PC-3 (cell line): ENCODE measurements at regions of chr12 and their contacts with region 1.

Region 1: GRCh38 chr12:25458047-25458552 is 95.0 kb downstream of the LMNTD1 start:
- DNase-seq: peak; percentile 93
- ATAC-seq: peak; percentile 95
- H3K4me3 ChIP-seq: peak overlapping the region; percentile 20; the same call in 1 of the 2 replicates
- H3K27ac ChIP-seq: peak overlapping the region; percentile 82
- H3K4me1 ChIP-seq: peaks cover 19% of the 10 kb centered on the region
- H3K27me3 ChIP-seq: no peaks in the 10 kb centered on the region
- CTCF ChIP-seq: no peak

Region 2: DNA sequence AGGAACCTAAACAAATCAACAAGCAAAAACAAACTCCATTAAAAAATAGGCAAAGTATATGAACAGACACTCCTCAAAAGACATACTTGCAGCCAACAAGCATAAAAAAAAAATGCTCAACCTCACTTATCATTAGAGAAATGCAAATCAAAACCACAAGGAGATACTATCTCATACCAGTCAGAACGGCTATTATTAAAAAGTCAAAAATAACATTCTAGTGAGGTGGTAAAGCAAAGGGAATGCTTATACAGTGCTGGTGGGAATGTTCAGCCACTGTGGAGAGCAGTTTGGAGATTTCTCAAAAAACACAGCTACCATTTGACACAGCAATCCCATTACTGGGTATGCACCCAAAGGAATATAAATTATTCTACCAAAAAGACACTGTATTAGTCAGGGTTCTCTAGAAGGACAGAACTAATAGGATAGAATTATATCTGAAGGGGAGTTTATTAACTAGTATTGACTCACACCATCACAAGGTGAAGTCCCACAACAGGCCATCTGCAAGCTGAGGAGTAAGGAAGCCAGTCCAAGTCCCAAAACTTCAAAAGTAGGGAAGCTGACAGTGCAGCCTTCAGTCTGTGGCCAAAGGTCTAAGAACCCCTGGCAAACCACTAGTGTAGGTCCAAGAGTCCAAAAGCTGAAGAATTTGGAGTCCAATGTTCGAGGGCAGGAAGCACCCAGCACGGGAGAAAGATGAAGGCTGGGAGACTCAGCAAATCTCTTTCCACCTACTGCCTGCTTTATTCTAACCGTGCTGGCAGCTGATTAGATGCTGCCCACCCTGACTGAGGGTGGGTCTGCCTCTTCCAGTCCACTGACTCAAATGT is 105.8 kb before region 1 on chr12:
- CTCF ChIA-PET with region 1: no interaction called
- POLR2A ChIA-PET with region 1: no interaction called
- intact Hi-C with region 1: no loop called
- DNase-seq: no peak
- ATAC-seq: no peak
- H3K4me3 ChIP-seq: no peak overlapping the region
- H3K27ac ChIP-seq: no peak overlapping the region
- H3K4me1 ChIP-seq: no peaks in the 10 kb centered on the region
- H3K27me3 ChIP-seq: no peaks in the 10 kb centered on the region
- CTCF ChIP-seq: no peak

Region 3: GRCh38 chr12:25491396-25492325 is 33.6 kb after region 1 on chr12:
- CTCF ChIA-PET with region 1: no interaction called
- POLR2A ChIA-PET with region 1: interaction called, 3 read pairs
- intact Hi-C with region 1: loop called (anchors 5 kb)
- DNase-seq: peak; percentile 20
- ATAC-seq: no peak
- H3K4me3 ChIP-seq: no peak overlapping the region
- H3K27ac ChIP-seq: no peak overlapping the region
- H3K4me1 ChIP-seq: peaks cover 33% of the 10 kb centered on the region
- H3K27me3 ChIP-seq: no peaks in the 10 kb centered on the region
- CTCF ChIP-seq: no peak

Region 4: DNA sequence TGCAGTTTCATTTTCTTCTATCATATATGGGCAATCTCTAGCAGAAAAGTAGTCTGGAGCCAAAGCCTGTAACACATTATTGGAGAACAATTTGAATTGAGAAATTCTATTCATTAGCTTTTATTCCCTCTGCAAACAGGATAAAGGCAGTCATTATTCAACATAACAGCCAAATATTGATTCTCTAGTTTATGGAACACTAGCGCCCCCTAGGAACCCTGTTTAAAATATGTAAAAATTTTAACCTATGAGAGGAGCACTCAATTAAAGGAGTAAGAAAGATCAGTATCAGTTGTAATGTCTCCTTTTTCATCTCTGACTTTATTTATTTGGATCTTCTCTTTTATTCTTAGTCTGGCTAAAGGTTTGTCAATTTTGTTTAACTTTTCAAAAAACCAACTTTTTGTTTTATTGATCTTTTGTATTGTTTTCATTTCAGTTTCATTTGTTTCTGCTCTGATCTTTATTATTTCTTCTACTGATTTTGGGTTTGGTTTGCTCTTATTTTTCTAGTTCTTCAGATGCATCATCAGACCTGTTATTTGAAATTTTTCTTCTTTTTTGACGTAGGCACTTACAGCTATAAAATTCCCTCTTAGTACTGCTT is 99.8 kb after region 1 on chr12:
- CTCF ChIA-PET with region 1: no interaction called
- POLR2A ChIA-PET with region 1: no interaction called
- intact Hi-C with region 1: loop called (anchors 5 kb)
- DNase-seq: peak; percentile 75
- ATAC-seq: no peak
- H3K4me3 ChIP-seq: no peak overlapping the region
- H3K27ac ChIP-seq: no peak overlapping the region
- H3K4me1 ChIP-seq: no peaks in the 10 kb centered on the region
- H3K27me3 ChIP-seq: no peaks in the 10 kb centered on the region
- CTCF ChIP-seq: peak; percentile 78

Region 5: DNA sequence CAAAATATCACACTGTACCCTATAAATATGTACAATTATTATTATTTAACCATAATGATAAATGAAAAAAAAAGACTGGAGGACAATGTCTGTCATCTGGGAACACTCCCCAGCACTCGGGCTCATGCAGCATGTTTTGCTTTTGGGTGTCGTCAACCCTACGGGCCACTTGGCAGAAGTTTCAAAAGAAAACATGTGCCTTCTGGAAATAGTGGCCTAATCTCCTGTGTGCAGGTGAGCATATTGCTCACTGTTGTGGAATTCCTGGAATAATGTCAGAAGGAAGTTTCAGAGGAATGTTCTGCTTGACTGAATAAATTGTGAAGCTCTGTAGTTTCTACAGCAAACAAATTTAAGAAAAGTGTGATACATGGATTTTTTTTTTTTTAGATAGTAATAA is 1035.6 kb after region 1 on chr12:
- CTCF ChIA-PET with region 1: no interaction called
- POLR2A ChIA-PET with region 1: interaction called, 12 read pairs
- intact Hi-C with region 1: no loop called
- DNase-seq: peak; percentile 97
- ATAC-seq: peak; percentile 85
- H3K4me3 ChIP-seq: no peak overlapping the region
- H3K27ac ChIP-seq: no peak overlapping the region
- H3K4me1 ChIP-seq: peaks cover 12% of the 10 kb centered on the region
- H3K27me3 ChIP-seq: no peaks in the 10 kb centered on the region
- CTCF ChIP-seq: no peak